Activated CD4-positive, alpha-beta T cell treated with anti-CD3 and anti-CD28 coated beads for 36 hours (primary cell): ENCODE measurements at regions of chr19 and their contacts with region 1.

Region 1: DNA sequence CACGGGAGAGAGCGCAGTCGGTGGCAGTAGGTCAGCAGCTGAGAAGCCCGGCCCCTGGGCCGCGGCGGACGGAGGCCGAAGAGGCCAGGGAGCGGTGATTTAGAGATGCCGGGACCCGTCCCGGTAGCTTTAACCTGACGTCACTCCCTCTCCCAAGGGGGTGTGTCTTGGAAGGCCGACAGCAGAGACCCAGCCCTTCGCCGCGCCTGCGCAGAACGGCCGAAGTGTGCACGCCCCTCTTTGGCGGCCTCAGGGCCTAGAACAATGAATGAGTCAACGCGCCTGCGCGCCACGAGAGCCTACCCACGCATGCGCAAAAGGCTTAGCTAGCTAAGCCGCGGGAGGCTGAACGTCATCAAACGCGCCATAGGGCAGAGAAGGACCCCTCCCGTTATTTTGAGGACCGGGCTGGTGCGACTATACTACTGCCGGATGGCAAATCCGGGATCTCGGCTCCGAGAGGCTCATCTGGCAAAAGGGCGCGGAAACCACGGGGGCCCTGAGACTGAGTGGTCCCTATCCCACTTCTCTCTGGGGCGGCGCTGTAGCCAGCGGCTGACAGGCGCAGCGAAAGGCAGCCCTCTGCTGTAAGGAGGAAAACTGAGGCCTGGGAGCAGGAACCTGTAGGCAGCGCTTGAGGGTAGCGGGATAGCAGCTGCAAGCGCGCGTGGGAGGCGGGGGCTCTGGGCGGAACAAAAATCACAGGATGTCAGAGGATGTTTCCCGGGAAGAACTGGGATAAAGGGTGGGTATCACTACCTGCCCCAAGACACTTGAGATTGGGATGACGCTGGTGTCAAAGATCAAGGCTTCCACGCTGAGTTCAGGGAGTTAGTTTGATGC is at the starts of genes IRGQ and ZNF576:
- DNase-seq: peak; percentile 100
- ATAC-seq: peak; percentile 83
- H3K4me3 Mint-ChIP-seq: peak within 1 kb of the TSS; percentile 87
- H3K27ac Mint-ChIP-seq: peak within 1 kb of the TSS; percentile 95
- H3K4me1 Mint-ChIP-seq: peaks cover 26% of the 10 kb centered on the region
- H3K27me3 Mint-ChIP-seq: no peaks in the 10 kb centered on the region
- total RNA-seq, gene IRGQ: 11.1 to 16.4 TPM
- total RNA-seq, gene ZNF576: 11.6 to 14.3 TPM

Region 2: GRCh38 chr19:43463381-43464136 is 132.7 kb before region 1 on chr19:
- CTCF ChIA-PET with region 1: interaction called, 8 read pairs
- POLR2A ChIA-PET with region 1: interaction called, 7 read pairs
- intact Hi-C with region 1: loop called in 1 of 2 experiments (anchors 1 kb)
- DNase-seq: peak; percentile 100
- ATAC-seq: peak; percentile 90
- H3K4me3 Mint-ChIP-seq: peak overlapping the region; percentile 87
- H3K27ac Mint-ChIP-seq: peak overlapping the region; percentile 93
- H3K4me1 Mint-ChIP-seq: peaks cover 48% of the 10 kb centered on the region
- H3K27me3 Mint-ChIP-seq: no peaks in the 10 kb centered on the region

Region 3: DNA sequence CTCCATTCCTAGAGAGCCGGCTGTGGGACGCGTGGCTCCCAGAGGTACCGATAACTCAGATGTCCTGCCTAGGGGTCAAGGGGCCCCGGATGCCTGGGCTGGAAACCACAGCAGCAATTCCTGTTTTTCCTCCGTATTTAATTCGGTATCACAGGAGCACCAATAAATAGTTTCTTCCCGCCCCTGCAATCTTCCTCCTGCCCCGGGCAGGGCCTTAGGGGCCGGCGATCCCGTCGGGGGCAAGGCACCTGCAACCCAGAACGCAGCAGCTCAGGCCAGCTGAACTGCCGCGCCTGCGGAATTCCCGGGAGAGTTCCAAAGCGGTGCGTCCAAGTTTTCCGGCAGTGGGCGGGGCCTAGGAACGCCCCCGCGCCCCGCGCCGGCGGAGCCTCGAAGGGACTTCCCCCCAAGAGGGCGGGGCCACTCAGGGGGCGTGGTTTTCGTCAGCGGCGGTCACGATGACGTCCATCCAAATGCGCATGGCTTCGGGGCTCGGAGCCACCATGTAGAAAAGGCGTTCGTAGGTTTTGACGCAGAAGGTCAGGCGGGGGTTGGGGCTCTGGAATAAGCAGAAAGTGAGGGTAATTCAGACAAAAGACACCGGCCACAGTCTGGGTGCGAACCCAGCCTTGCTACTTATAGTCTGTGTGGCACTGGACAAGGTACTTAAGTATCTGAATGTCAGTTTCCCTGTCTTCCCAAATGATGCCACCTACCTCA is 121.1 kb before region 1 on chr19:
- CTCF ChIA-PET with region 1: no interaction called
- POLR2A ChIA-PET with region 1: no interaction called
- intact Hi-C with region 1: no loop called
- DNase-seq: peak; percentile 98
- ATAC-seq: peak; percentile 86
- H3K4me3 Mint-ChIP-seq: peak overlapping the region; percentile 62
- H3K27ac Mint-ChIP-seq: peak overlapping the region; percentile 90
- H3K4me1 Mint-ChIP-seq: peaks cover 35% of the 10 kb centered on the region
- H3K27me3 Mint-ChIP-seq: no peaks in the 10 kb centered on the region

Region 4: GRCh38 chr19:43519436-43520088 is 76.7 kb before region 1 on chr19:
- CTCF ChIA-PET with region 1: interaction called, 30 read pairs
- POLR2A ChIA-PET with region 1: interaction called, 8 read pairs
- intact Hi-C with region 1: no loop called
- DNase-seq: peak; percentile 90
- ATAC-seq: peak; percentile 100
- H3K4me3 Mint-ChIP-seq: no peak overlapping the region
- H3K27ac Mint-ChIP-seq: peak overlapping the region; percentile 19
- H3K4me1 Mint-ChIP-seq: peaks cover 17% of the 10 kb centered on the region
- H3K27me3 Mint-ChIP-seq: no peaks in the 10 kb centered on the region

Region 5: GRCh38 chr19:43532962-43533545 is 63.2 kb before region 1 on chr19 and contains the start of gene ZNF575:
- CTCF ChIA-PET with region 1: interaction called, 11 read pairs
- POLR2A ChIA-PET with region 1: interaction called, 5 read pairs
- intact Hi-C with region 1: loop called (anchors 1 to 2 kb)
- DNase-seq: peak; percentile 95
- ATAC-seq: peak; percentile 57
- H3K4me3 Mint-ChIP-seq: peak within 1 kb of the TSS; percentile 83
- H3K27ac Mint-ChIP-seq: peak within 1 kb of the TSS; percentile 97
- H3K4me1 Mint-ChIP-seq: peaks cover 20% of the 10 kb centered on the region
- H3K27me3 Mint-ChIP-seq: no peaks in the 10 kb centered on the region
- total RNA-seq, gene ZNF575: 3.4 to 4.3 TPM

Region 6: DNA sequence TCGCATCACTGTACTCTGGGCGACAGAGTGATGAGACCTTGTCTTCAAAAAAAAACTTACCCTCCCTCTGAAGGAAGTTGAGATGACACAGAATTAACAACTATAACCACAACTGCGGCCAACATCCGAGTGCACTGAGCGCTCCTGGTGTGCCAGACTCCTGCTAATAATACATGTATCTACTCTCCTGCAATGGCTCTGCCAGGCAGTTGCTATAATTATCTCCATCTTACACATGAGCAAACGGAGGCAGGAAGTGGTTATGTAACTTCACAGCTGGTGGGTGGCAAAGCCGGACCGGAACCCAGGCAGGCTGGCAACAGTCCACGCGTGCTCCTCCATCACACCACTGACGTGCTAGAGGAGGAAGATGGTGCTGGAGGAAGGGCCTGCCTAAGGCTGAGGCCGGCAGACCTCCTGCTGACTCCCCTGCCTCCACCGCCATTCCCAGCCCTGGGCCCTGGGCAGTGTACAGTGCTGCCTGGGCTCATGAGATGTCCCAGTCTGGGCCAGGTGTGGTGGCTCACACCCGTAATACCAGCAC is 33.5 kb before region 1 on chr19:
- CTCF ChIA-PET with region 1: interaction called, 88 read pairs
- POLR2A ChIA-PET with region 1: interaction called, 9 read pairs
- intact Hi-C with region 1: loop called in 1 of 2 experiments (anchors 1 kb)
- DNase-seq: peak; percentile 82
- ATAC-seq: peak; percentile 90
- H3K4me3 Mint-ChIP-seq: no peak overlapping the region
- H3K27ac Mint-ChIP-seq: peak overlapping the region; percentile 94
- H3K4me1 Mint-ChIP-seq: peaks cover 46% of the 10 kb centered on the region
- H3K27me3 Mint-ChIP-seq: no peaks in the 10 kb centered on the region

Region 7: DNA sequence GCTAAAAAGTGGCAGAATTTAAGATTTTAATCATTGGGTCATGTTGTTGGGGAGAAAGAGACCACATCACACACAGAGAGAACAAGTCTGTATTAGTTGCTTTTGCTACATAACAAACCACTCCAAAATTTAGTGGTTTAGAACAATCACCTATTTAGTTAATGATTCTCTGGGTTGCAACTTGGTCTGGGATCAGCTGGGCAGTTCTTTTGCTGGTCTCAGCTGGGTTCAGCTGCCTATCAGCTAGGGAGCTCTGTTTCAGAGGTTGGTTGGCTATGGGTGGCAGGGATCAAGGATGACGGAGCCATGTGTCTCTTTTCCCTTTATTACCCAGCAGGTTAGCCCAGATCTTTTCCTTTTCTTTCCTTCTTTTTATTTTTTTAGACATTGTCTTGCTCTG is 11.7 kb before region 1 on chr19:
- CTCF ChIA-PET with region 1: interaction called, 12 read pairs
- POLR2A ChIA-PET with region 1: no interaction called
- intact Hi-C with region 1: no loop called
- DNase-seq: no peak
- ATAC-seq: no peak
- H3K4me3 Mint-ChIP-seq: no peak overlapping the region
- H3K27ac Mint-ChIP-seq: no peak overlapping the region
- H3K4me1 Mint-ChIP-seq: peaks cover 11% of the 10 kb centered on the region
- H3K27me3 Mint-ChIP-seq: no peaks in the 10 kb centered on the region

Region 8: GRCh38 chr19:43784981-43785808 is 189.0 kb after region 1 on chr19:
- CTCF ChIA-PET with region 1: interaction called, 3 read pairs
- POLR2A ChIA-PET with region 1: no interaction called
- intact Hi-C with region 1: loop called in 1 of 2 experiments (anchors 1 kb)
- DNase-seq: peak; percentile 76
- ATAC-seq: peak; percentile 11
- H3K4me3 Mint-ChIP-seq: peak overlapping the region; percentile 57
- H3K27ac Mint-ChIP-seq: peak overlapping the region; percentile 81
- H3K4me1 Mint-ChIP-seq: peaks cover 39% of the 10 kb centered on the region
- H3K27me3 Mint-ChIP-seq: peaks cover 7% of the 10 kb centered on the region